ENCODE measurements at regions of chr17 and their contacts with region 1.

Region 1: DNA sequence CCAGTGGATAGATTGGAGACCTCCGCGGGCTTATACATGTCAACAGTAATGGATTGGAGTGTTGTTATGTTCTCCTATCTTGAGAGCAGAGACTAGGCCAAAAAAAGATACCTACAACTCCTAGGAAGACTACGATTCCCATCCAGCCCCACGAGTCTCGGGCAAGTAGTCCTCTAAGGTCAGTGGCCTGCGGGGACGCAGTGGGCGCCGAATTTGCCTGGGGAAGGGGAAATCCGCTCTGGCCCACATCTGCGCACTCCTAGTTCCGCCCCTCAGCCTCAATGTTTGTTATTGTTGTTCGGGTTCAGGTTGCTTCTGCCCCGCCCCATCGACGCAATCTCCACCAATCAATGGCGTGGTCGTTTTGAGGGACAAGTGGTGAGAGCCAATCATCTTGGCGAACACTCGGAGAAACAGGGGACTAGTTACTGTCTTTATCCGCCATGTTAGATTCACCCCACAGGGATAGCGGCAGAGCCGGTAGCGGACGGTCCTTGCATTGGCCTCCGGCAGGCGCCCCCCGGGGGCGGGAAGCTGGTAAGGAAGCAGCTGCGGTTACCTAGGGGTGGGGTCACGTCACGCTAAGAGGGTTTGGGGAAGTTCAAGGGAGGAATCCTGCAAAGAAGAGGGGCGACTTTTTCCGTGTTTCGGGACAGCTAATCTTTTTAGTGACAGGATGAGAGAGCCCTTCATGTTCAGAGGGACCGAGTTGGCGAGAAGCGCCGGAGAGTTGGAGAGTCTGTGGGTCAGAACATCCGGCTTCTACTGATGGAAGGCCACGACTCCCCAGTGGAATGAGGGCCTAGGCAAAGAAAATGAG is at the start of gene NBR1:
- DNase-seq: peak; percentile 94 to 96
- ATAC-seq: peak; percentile 78
- total RNA-seq, gene NBR1: 103 to 131 TPM

Region 2: GRCh38 chr17:43024407-43025289 is 146.3 kb before region 1 on chr17 and contains the start of gene RND2:
- intact Hi-C with region 1: loop called in 1 of 2 experiments (anchors 10 kb)
- DNase-seq: peak; percentile 83 to 90
- ATAC-seq: peak; percentile 61
- total RNA-seq, gene RND2: 0.15 to 1.1 TPM

Region 3: GRCh38 chr17:43068570-43069367 is 102.2 kb before region 1 on chr17:
- intact Hi-C with region 1: no loop called
- DNase-seq: no peak
- ATAC-seq: no peak

Measured in left colon (tissue), 2 donors.